Motor neuron (in vitro differentiated cells): ENCODE measurements at regions of chr11 and their contacts with region 1.

Region 1: GRCh38 chr11:122491509-122491908 is 164.0 kb upstream of the UBASH3B start:
- ATAC-seq: peak in 3 of 8 experiments; percentile 44 to 65 (median 51)
- H3K4me3 ChIP-seq: no peak overlapping the region
- H3K27ac ChIP-seq: no peak overlapping the region
- H3K4me1 ChIP-seq: peaks cover 0 to 2% of the 10 kb centered on the region in 2 donors

Region 2: GRCh38 chr11:122108192-122108799 is 383.2 kb before region 1 on chr11:
- in situ Hi-C with region 1: loop called in 1 of 9 experiments (anchors 25 kb)
- ATAC-seq: peak in 2 of 8 experiments; percentile 10 to 50
- H3K4me3 ChIP-seq: no peak overlapping the region
- H3K27ac ChIP-seq: no peak overlapping the region
- H3K4me1 ChIP-seq: peaks cover 6 to 20% of the 10 kb centered on the region in 2 donors

Region 3: GRCh38 chr11:122354025-122354697 is 137.3 kb before region 1 on chr11:
- in situ Hi-C with region 1: no loop called
- ATAC-seq: peak in 5 of 8 experiments; percentile 14 to 69 (median 49)
- H3K4me3 ChIP-seq: peak overlapping the region in 1 of 5 donors; percentile 4
- H3K27ac ChIP-seq: peak overlapping the region in 1 of 2 donors; percentile 17
- H3K4me1 ChIP-seq: peaks cover 22 to 41% of the 10 kb centered on the region in 2 donors